Colonic mucosa (tissue), 4 donors: ENCODE measurements at regions of chr1 and their contacts with region 1.

Region 1: GRCh38 chr1:13662493-13662892 is 37.5 kb upstream of the PRDM2 start:
- DNase-seq: no peak
- H3K4me3 ChIP-seq: no peak overlapping the region
- H3K27ac ChIP-seq: no peak overlapping the region
- H3K4me1 ChIP-seq: no peaks in the 10 kb centered on the region
- H3K27me3 ChIP-seq: no peaks in the 10 kb centered on the region
- CTCF ChIP-seq: no peak

Region 2: GRCh38 chr1:13725714-13726175 is 63.3 kb after region 1 on chr1:
- intact Hi-C with region 1: loop called (anchors 5 kb)
- DNase-seq: peak; percentile 55
- H3K4me3 ChIP-seq: no peak overlapping the region
- H3K27ac ChIP-seq: no peak overlapping the region
- H3K4me1 ChIP-seq: no peaks in the 10 kb centered on the region
- H3K27me3 ChIP-seq: no peaks in the 10 kb centered on the region
- CTCF ChIP-seq: peak; percentile 38

Region 3: GRCh38 chr1:13813398-13814012 is 151.0 kb after region 1 on chr1:
- intact Hi-C with region 1: loop called (anchors 5 kb)
- DNase-seq: no peak
- H3K4me3 ChIP-seq: no peak overlapping the region
- H3K27ac ChIP-seq: no peak overlapping the region
- H3K4me1 ChIP-seq: no peaks in the 10 kb centered on the region
- H3K27me3 ChIP-seq: no peaks in the 10 kb centered on the region
- CTCF ChIP-seq: peak; percentile 21